ENCODE measurements at regions of chr3 and their contacts with region 1.

Region 1: DNA sequence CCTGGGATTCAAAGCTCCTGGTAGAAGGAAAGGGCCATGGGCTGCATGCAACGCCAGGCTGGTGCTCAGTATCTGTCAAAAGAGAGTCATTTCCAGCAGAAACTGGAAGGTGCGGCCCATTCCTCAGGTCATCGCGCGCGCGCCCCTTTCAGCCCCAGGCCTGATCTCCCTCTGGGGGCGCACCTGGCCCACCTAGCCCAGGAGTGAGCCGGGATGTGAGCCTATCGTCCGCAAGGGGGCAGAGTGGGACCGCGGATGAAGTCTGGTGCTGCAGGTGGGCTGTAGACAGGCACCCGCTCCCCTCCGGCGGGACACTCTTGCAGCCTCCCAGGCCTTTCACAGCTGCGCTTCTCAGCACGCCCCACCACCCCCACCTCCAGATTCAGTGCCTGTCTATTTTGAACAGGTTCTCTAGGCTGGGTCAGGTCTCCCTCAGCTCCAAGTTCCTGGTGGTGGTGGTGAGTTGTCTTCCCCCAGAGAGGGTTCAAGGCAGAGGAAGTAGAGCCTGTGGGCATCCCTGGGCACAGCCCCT is 5.8 kb upstream of the RPL29 start:
- DNase-seq: no peak
- ATAC-seq: peak; percentile 97
- H3K4me3 ChIP-seq: no peak overlapping the region
- H3K27ac ChIP-seq: no peak overlapping the region
- H3K4me1 ChIP-seq: peaks cover 12% of the 10 kb centered on the region
- H3K27me3 ChIP-seq: no peaks in the 10 kb centered on the region; a peak in 2 of 4 replicates
- CTCF ChIP-seq: peak; percentile 98 to 99 (median 98)
- EP300 ChIP-seq: no peak
- POLR2A ChIP-seq: no peak
- RAD21 ChIP-seq: peak; percentile 97

Region 2: DNA sequence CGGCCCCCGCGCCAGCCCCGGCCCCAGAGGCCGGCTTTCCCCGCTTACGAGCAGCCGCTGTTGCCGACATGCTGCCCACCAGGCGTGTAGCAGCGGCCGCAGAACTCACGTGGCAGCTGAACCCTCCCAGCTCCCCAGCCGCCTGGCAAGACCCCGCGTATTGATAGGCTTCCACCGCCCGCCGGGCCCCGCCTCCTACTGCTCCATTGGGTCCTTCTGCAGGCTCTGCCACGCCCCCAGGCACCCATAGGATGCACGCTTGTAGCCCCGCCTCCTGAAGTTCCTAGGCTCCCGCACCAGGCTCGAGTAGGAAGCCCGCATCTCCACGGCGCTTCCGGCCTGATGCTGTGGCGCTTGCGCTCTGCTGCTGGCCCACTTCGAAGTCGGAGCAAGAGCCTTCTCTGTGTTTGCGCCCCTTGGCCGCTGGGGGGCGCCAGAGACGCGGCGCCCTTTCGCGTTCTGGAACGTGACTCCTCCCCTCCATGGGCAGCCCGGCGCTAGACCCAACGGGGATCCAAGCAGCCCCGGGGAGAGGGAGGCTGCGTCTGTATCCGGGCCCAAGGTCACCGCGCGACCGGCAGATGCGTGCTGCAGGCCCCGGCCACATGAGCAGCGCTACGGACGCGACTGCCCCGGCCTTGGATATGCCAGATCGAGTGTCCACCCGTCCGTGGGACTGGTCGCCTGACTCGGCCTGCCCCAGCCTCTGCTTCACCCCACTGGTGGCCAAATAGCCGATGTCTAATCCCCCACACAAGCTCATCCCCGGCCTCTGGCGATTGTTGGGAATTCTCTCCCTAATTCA is 59.5 kb before region 1 on chr3 and contains the starts of genes PARP3 and RRP9:
- CTCF ChIA-PET with region 1: interaction called, 15 read pairs
- POLR2A ChIA-PET with region 1: interaction called, 4 read pairs
- RAD21 ChIA-PET with region 1: interaction called, 3 read pairs
- SMC1A ChIA-PET with region 1: interaction called, 13 read pairs
- in situ Hi-C with region 1: no loop called
- intact Hi-C with region 1: loop called (anchors 2 kb)
- DNase-seq: peak; percentile 99
- ATAC-seq: peak; percentile 92
- H3K4me3 ChIP-seq: peak within 1 kb of the TSS; percentile 96
- H3K27ac ChIP-seq: peak within 1 kb of the TSS; percentile 98
- H3K4me1 ChIP-seq: peaks cover 11% of the 10 kb centered on the region
- H3K27me3 ChIP-seq: no peaks in the 10 kb centered on the region
- CTCF ChIP-seq: peak; percentile 99 to 100 (median 99); a peak in 5 of 6 replicates
- EP300 ChIP-seq: peak in 1 of 2 experiments; percentile 38; a peak in 1 of 4 replicates
- POLR2A ChIP-seq: peak; percentile 91
- RAD21 ChIP-seq: peak; percentile 83
- polyA plus RNA-seq, gene PARP3: 2.1 to 2.2 TPM
- polyA plus RNA-seq, gene RRP9: 4.7 to 10.6 TPM

Region 3: GRCh38 chr3:52022323-52023100 is 21.0 kb after region 1 on chr3:
- CTCF ChIA-PET with region 1: interaction called, 17 read pairs
- POLR2A ChIA-PET with region 1: interaction called, 6 read pairs
- RAD21 ChIA-PET with region 1: interaction called, 48 read pairs
- SMC1A ChIA-PET with region 1: interaction called, 12 read pairs
- in situ Hi-C with region 1: no loop called
- intact Hi-C with region 1: no loop called
- DNase-seq: no peak
- ATAC-seq: no peak
- H3K4me3 ChIP-seq: no peak overlapping the region
- H3K27ac ChIP-seq: no peak overlapping the region
- H3K4me1 ChIP-seq: peaks cover 18% of the 10 kb centered on the region
- H3K27me3 ChIP-seq: no peaks in the 10 kb centered on the region
- CTCF ChIP-seq: no peak
- EP300 ChIP-seq: no peak
- POLR2A ChIP-seq: no peak
- RAD21 ChIP-seq: no peak

Region 4: GRCh38 chr3:52086921-52087663 is 85.6 kb after region 1 on chr3:
- CTCF ChIA-PET with region 1: interaction called, 10 read pairs
- POLR2A ChIA-PET with region 1: no interaction called
- RAD21 ChIA-PET with region 1: interaction called, 4 read pairs
- SMC1A ChIA-PET with region 1: no interaction called
- in situ Hi-C with region 1: no loop called
- intact Hi-C with region 1: no loop called
- DNase-seq: no peak
- ATAC-seq: peak; percentile 22
- H3K4me3 ChIP-seq: no peak overlapping the region
- H3K27ac ChIP-seq: peak overlapping the region; percentile 58
- H3K4me1 ChIP-seq: peaks cover 25% of the 10 kb centered on the region
- H3K27me3 ChIP-seq: no peaks in the 10 kb centered on the region
- CTCF ChIP-seq: no peak
- EP300 ChIP-seq: no peak
- POLR2A ChIP-seq: no peak
- RAD21 ChIP-seq: no peak

Region 5: GRCh38 chr3:52123106-52123725 is 121.7 kb after region 1 on chr3:
- CTCF ChIA-PET with region 1: interaction called, 181 read pairs
- POLR2A ChIA-PET with region 1: interaction called, 4 read pairs
- RAD21 ChIA-PET with region 1: interaction called, 125 read pairs
- SMC1A ChIA-PET with region 1: interaction called, 81 read pairs
- in situ Hi-C with region 1: no loop called
- intact Hi-C with region 1: loop called (anchors 1 kb)
- DNase-seq: no peak
- ATAC-seq: peak; percentile 91
- H3K4me3 ChIP-seq: no peak overlapping the region
- H3K27ac ChIP-seq: 0 out of 2 replicates have a peak overlapping the region, but pooled peaks have one; percentile 13
- H3K4me1 ChIP-seq: peaks cover 32% of the 10 kb centered on the region
- H3K27me3 ChIP-seq: no peaks in the 10 kb centered on the region
- CTCF ChIP-seq: peak; percentile 95 to 97 (median 97); a peak in 5 of 6 replicates
- EP300 ChIP-seq: no peak
- POLR2A ChIP-seq: no peak
- RAD21 ChIP-seq: peak; percentile 96

Region 6: DNA sequence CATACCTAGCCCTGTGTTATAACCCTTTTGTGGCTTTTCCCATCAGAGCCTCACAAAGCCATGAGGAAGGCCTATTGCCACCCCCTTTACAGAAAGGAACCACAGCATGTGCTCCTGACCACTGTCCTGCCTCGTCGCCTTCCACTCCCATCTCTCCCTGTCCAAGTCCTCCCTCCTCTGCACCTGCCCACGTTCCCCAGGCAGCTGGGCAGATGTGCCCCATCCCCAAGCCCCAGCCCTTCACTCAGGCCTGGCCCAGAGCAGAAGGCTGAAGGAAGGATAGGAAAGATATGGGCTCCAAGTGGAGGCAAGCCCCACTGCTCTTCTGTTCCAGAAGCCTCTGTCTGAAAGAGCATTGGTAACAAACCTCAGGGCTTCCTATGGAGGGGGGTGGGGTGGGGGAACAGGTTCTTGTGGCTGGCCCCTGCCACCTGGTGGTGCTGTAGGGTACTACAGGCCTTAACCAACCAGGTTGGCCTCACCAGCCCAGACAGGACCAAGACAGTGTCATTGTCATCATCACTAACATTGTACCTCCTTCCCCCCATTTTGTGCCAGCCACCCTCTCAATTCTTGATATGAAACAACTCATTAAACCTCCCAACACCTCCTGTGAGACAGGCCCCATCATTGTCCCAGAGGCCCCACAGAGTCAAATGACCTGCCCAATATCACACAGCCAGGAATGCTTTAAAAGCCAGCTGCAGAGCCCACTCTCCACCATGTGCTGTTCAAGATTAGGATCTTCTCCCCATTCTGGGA is 142.7 kb after region 1 on chr3:
- CTCF ChIA-PET with region 1: interaction called, 169 read pairs
- POLR2A ChIA-PET with region 1: no interaction called
- RAD21 ChIA-PET with region 1: interaction called, 51 read pairs
- SMC1A ChIA-PET with region 1: interaction called, 16 read pairs
- in situ Hi-C with region 1: loop called (anchors 5 kb)
- intact Hi-C with region 1: loop called (anchors 1 kb)
- DNase-seq: no peak
- ATAC-seq: peak; percentile 100
- H3K4me3 ChIP-seq: no peak overlapping the region
- H3K27ac ChIP-seq: no peak overlapping the region
- H3K4me1 ChIP-seq: peaks cover 5% of the 10 kb centered on the region; the same call in 1 of the 2 replicates
- H3K27me3 ChIP-seq: no peaks in the 10 kb centered on the region
- CTCF ChIP-seq: peak; percentile 92 to 97 (median 94); a peak in 5 of 6 replicates
- EP300 ChIP-seq: no peak
- POLR2A ChIP-seq: no peak
- RAD21 ChIP-seq: peak; percentile 93

Region 7: DNA sequence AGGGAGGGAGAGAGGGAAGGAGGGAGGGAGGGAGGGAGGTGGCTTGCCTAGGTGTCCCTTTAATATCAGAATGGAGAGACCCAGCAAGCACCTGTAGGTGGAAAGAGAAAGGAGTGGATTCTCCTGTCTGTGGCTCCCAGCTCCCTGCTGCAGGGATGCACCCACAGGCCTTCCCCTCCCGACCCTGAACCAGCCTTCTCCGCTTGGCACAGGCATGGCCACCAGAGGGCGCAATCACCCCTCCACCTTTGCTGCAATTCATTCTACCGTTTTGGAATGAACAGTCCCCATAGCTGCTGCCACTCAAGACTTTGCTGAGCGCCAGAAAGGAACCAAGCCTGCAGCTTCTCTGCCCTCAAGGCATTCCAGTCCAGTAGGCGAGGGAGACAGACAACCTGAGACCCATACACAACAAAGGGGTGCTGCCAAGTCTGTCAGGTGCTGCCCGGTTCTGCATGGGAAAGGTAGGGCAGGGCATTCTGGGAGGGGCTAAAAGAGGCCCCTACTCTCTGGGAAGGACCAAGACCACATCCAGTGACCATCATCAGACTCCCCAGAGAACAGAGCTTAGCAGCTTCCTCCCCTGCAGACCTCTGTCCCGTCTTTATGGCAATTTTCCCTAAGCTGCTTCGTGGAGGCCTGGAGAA is 219.0 kb after region 1 on chr3:
- CTCF ChIA-PET with region 1: interaction called, 16 read pairs
- POLR2A ChIA-PET with region 1: no interaction called
- RAD21 ChIA-PET with region 1: interaction called, 11 read pairs
- SMC1A ChIA-PET with region 1: interaction called, 8 read pairs
- in situ Hi-C with region 1: no loop called
- intact Hi-C with region 1: no loop called
- DNase-seq: no peak
- ATAC-seq: peak; percentile 95
- H3K4me3 ChIP-seq: no peak overlapping the region
- H3K27ac ChIP-seq: no peak overlapping the region
- H3K4me1 ChIP-seq: peaks cover 25% of the 10 kb centered on the region
- H3K27me3 ChIP-seq: no peaks in the 10 kb centered on the region
- CTCF ChIP-seq: peak; percentile 92 to 96 (median 93)
- EP300 ChIP-seq: no peak
- POLR2A ChIP-seq: no peak
- RAD21 ChIP-seq: peak; percentile 83